ENCODE measurements at regions of chr20 and their contacts with region 1.

Region 1: DNA sequence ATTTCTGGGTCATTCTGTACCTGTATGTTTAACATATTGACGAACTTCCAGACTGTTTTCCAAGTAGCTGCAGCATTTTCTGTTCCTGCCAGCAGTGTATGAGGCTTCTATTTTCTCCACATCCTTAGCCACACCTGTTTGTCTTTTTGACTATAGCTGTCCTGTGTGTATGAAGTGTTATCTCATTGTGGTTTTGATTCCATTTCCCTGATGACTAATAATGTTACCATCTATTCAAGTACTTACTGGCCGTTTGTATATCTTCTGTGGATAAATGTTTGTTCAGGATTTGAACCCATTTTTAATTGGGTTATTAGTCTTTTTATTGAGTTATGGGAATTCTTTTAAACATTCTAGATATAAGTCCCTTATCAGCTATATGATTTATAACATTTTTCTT is 95.2 kb downstream of the JAG1 start:
- DNase-seq: peak; percentile 54
- H3K4me3 Mint-ChIP-seq: no peak overlapping the region
- H3K27ac Mint-ChIP-seq: peak overlapping the region; percentile 71
- H3K4me1 Mint-ChIP-seq: peaks cover 32% of the 10 kb centered on the region
- H3K27me3 Mint-ChIP-seq: no peaks in the 10 kb centered on the region
- CTCF ChIP-seq: no peak

Region 2: GRCh38 chr20:10565191-10565921 is 13.3 kb before region 1 on chr20:
- CTCF ChIA-PET with region 1: interaction called, 11 read pairs
- POLR2A ChIA-PET with region 1: interaction called, 19 read pairs
- intact Hi-C with region 1: no loop called
- DNase-seq: peak; percentile 66
- H3K4me3 Mint-ChIP-seq: no peak overlapping the region
- H3K27ac Mint-ChIP-seq: peak overlapping the region; percentile 57
- H3K4me1 Mint-ChIP-seq: no peaks in the 10 kb centered on the region
- H3K27me3 Mint-ChIP-seq: no peaks in the 10 kb centered on the region
- CTCF ChIP-seq: no peak

Region 3: DNA sequence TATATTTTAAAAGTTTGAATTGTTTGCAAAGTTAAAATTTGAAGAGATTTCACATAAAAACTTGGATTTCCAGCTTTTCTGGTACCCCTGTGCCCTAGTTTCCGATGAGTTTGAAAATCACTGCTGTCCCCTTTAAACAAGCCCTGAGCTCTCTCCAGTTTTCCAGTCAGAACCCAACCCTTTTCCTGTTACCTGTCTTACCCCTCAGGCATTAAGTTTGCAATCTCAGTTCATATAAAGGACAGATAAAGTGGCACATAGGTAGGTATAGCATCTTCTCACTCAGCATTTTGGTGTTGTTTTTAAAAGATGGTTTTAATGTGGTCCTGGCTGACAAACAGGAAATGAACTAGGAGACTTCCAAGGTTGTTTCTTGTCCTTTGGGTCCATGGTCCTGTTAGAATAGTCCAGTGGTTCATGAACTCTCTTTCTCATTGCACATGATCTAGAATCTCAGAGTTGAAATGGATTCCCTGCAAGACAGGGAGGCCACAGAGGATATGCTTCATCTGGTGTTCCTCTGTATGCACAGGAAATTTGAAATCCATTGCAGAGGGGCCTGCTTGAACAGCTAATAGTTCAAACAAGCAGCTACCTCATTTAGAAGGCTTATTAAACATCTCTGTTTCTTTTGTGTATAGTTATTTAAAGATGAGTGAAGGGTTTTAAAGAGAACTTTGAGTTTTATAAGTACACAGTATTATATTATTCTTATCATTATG is 12.5 kb after region 1 on chr20:
- CTCF ChIA-PET with region 1: interaction called, 6 read pairs
- POLR2A ChIA-PET with region 1: interaction called, 39 read pairs
- intact Hi-C with region 1: no loop called
- DNase-seq: peak; percentile 76
- H3K4me3 Mint-ChIP-seq: peak overlapping the region; percentile 24
- H3K27ac Mint-ChIP-seq: peak overlapping the region; percentile 96
- H3K4me1 Mint-ChIP-seq: peaks cover 37% of the 10 kb centered on the region
- H3K27me3 Mint-ChIP-seq: no peaks in the 10 kb centered on the region
- CTCF ChIP-seq: no peak

Region 4: DNA sequence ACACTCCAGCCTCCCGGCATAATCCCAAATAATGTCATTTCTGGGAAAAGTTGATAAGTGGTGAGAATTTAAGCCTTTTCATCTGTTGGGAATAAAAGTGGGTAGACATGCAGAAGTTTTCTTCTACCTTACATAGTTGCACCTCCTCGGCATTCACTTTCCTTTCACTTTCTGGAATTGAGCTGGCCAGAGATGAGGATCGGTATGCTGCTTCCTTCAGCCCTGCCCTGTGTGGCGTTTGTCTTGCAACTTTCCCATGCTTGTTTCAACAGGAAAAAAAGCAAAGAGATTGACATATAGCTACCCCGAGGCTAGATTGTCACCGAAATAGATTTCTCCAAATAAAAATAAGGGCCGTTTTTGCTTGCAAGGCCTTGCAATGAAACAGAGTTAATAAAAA is 161.0 kb after region 1 on chr20:
- CTCF ChIA-PET with region 1: no interaction called
- POLR2A ChIA-PET with region 1: no interaction called
- intact Hi-C with region 1: no loop called
- DNase-seq: peak; percentile 56
- H3K4me3 Mint-ChIP-seq: peak overlapping the region; percentile 67
- H3K27ac Mint-ChIP-seq: peak overlapping the region; percentile 81
- H3K4me1 Mint-ChIP-seq: peaks cover 6% of the 10 kb centered on the region
- H3K27me3 Mint-ChIP-seq: no peaks in the 10 kb centered on the region
- CTCF ChIP-seq: no peak

Measured in MCF 10A (cell line).